ENCODE measurements at regions of chr13 and their contacts with region 1.

Region 1: DNA sequence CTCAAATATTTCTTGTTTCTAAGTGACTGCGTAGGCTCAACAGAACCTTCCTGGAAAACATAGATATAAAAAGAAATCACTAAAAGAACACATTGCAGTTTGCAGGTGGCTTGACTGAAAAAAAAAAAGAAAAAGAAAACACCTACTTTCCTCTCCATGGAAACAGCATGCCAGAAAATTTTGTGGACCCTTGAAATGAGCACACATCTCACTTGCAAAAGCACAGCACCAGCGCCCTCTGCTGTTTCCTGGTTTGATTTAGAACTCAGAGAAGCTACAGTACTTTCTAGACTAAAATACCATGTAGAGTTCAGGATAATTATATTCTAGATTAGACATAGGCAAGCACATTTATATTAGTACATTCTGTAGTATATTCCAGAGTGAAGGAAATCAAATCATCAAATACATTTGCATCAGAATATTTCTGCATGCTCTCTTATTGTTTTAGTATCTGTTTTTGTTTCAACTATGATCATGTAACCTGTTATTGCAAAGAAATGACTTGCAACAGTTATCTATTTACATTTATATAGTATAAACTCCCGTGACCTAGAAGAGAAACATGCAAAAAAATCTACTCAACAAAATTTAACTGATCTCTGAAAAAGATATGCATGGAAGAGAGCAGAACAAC is 22.3 kb upstream of the XPO4 start:
- DNase-seq: peak; percentile 68 to 94
- H3K4me3 ChIP-seq: no peak overlapping the region
- H3K4me1 ChIP-seq: no peaks in the 10 kb centered on the region
- H3K27me3 ChIP-seq: no peaks in the 10 kb centered on the region

Region 2: GRCh38 chr13:20182231-20182846 is 742.5 kb before region 1 on chr13:
- in situ Hi-C with region 1: loop called (anchors 10 kb)
- DNase-seq: peak; percentile 69 to 79
- H3K4me3 ChIP-seq: no peak overlapping the region
- H3K4me1 ChIP-seq: no peaks in the 10 kb centered on the region
- H3K27me3 ChIP-seq: peaks cover 4% of the 10 kb centered on the region; the same call in 1 of the 2 replicates

Region 3: DNA sequence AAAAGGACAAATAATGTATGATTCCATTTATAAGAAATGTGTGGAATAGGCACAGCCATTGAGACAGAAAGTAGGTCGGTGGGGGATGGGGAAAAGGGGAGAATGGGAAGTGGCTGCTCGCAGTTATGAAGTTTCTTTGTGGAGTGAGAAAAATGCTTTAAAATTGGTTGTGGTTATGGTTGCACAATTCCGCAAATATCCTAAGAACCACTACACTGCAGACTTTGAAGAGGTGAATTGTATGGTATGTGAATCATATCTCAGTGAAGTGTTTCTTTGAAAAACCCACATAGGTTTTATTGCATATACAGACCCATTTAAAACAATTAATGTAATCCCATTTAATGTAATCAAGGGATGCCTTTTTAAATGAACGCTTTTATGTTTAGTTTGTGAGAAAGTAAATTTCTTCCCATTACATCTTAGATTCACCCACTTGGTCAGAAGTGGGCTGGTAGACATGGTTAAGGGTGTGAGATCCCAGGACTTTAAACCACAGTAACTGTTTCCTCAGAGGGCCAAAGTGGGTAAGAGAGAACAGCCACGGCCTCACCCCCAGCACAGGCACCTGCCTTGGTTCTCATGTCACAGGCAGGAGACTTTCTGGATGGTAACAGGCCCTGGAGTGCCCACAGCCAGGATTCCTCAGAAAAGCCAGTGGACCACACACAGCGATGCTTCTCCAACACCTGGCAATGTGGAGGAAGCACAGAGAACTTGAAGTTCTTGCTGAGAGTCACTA is 573.4 kb before region 1 on chr13:
- in situ Hi-C with region 1: no loop called
- DNase-seq: no peak
- H3K4me3 ChIP-seq: no peak overlapping the region
- H3K4me1 ChIP-seq: no peaks in the 10 kb centered on the region
- H3K27me3 ChIP-seq: no peaks in the 10 kb centered on the region

Region 4: DNA sequence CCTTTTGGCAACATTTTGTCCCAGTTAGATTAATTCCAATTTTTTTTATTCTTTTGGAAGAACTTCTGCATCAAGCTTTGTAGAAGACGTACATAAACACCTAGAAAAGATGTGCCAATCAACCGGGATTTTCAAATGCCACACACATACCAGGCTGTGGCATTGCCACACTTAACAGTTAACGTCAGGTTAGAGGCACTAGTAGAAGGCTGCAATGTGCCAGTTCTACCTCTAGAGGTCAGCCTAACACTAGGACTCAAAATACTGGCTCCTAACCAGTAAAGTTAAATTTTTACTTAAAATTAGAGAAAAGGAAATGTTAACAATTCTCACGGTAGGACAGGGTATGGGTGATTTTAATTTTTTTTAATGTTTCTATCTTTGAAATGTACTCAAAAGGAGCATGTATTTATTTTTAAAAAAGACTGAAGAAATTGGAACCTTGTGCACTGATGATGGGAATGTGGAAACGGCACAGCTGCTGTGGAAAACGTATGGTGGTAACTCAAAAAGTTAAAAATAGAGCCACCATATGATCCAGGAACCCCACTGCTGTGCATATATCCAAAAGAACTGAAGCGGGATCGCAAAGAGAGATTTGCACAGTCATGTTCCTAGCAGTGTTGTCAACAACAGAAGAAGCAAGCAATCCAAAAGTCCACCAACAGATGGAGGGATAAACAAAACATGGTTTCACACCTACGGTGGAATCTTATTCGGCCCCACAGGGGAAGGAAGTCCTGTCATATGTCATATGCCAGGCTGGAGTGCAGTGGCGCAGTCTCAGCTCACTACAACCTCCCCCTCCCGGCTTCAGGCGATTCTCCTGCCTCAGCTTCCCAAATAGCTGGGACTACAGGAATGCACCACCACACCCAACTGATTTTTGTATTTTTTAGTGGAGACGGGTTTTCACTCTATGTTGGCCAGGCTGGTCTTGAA is 429.5 kb before region 1 on chr13:
- in situ Hi-C with region 1: loop called (anchors 5 kb)
- DNase-seq: peak; percentile 53 to 67
- H3K4me3 ChIP-seq: no peak overlapping the region
- H3K4me1 ChIP-seq: no peaks in the 10 kb centered on the region
- H3K27me3 ChIP-seq: no peaks in the 10 kb centered on the region

Region 5: DNA sequence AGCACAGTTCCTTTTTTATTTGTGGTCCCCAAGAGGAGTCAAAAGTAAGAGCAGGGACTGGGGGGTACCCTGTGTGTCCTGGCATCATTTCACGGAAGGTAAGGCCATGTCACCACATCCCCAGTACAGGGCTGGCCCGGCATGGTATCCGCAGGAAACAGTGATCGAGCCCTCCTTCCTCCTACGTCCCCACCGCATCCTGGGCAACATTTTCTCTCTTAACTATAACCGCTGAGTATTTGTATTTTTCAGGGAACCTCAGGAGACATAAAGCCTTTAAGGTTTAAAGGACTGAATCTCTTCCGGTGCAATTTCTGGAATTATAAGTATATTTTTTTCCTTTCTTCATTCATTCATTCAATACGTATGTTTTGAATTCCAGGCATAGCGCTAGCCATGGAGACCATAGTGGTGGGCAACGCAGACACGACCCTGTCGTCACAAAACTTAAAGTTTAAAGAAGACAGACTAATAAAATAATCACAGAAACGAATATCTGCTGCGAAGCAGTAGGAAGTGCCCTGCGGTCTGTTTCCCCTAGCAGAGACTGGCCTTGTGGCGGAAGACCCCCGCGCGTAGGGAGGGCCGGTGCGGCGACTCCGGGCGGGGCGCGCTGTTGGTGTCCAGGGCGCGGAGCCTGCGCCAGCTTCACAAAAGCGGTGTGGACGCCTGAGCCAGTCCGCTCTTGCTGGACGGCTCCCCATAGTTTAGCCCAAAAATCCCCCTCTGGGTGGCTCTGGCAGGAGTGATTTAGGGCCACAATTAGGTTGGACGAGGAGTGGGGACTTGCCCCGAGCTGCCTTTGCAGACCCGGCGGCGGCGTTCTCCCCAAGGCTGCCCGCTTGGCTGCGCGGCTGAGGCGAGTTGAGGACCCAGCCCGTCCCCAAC is 150.4 kb after region 1 on chr13:
- in situ Hi-C with region 1: no loop called
- DNase-seq: peak; percentile 32 to 75
- H3K4me3 ChIP-seq: peak overlapping the region; percentile 35
- H3K4me1 ChIP-seq: peaks cover 9% of the 10 kb centered on the region
- H3K27me3 ChIP-seq: no peaks in the 10 kb centered on the region

Region 6: DNA sequence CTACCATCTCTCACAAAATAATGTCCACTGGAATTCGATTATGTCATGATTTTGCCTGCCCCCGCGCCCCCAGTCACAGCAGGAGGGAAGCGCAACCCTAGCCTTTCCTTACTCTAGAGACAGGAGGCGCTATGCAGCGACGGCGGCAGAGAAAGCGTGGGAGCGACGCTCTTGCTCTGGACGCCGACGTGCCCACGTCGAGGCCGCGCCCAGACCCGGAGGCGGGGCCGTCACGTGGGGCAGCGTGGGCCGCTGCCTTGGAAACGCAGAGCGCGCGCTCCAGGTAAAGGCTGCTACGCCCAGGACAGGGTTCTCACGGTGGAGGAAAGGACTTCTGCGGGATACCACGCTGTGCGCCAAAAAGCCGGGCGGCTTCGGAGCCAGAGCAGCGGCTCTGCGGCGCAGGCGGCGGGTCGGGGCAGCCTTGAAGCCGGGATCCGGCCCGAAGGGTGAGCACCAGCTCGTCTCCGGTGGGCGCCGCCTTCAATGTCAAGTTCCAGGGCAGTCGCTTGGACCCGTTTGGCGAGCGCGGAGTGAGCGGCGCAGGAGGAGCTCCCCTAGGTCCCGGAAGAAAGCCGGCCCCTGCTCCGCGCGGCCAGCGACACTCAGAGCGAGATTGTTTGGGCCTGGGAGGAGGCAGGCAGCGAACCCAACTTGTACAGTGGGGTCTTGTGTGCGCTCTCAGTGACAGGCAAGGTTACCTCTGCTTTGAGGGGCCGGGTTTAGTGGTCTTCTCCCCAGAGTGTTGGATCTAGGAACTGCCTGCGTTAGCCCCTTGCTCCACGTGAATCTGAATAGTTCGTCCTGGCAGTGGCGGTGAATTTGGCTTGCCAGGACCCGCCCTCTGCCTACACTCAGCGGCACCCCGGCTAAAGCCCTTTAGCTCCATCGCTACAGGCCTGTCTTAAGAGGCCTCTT is 373.3 kb after region 1 on chr13:
- in situ Hi-C with region 1: loop called (anchors 25 kb)
- DNase-seq: peak; percentile 86 to 89
- H3K4me3 ChIP-seq: peak overlapping the region; percentile 78
- H3K4me1 ChIP-seq: peaks cover 8% of the 10 kb centered on the region
- H3K27me3 ChIP-seq: no peaks in the 10 kb centered on the region

Region 7: DNA sequence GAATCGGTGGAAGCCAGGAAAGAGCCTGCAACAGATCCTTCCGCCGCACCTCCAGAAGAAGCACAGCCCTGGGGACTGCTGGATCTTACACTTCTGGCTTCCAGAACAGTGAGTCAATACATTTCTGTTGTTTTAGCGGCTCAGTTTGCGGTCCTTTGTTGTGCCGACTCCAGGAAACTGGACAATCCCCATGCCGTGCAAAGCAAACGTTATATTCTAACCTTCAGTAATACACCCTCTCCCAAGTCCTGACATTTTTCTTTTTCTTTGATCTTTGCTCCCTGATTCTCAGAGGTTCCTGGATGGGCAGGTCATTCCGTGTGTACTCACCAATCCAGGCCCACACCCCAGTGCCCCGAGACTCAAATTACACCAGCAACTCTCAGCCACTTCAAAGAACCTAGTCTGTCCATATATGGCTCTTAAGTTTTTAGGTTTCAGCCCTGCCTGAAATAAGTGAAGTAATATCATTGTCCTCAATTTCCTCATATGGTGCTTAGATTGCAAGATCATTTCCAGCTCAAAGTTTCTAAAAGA is 1868.8 kb after region 1 on chr13:
- in situ Hi-C with region 1: loop called (anchors 25 kb)
- DNase-seq: no peak
- H3K4me3 ChIP-seq: no peak overlapping the region
- H3K4me1 ChIP-seq: peaks cover 5% of the 10 kb centered on the region
- H3K27me3 ChIP-seq: no peaks in the 10 kb centered on the region